Common myeloid progenitor, CD34-positive (primary cell): ENCODE measurements at regions of chr15 and their contacts with region 1.

Region 1: GRCh38 chr15:52805351-52806283 is 15.5 kb upstream of the ONECUT1 start:
- DNase-seq: peak in 2 of 3 donors; percentile 56 to 66
- H3K4me3 ChIP-seq: peak overlapping the region in 6 of 7 experiments; percentile 10 to 56 (median 34)
- H3K27ac ChIP-seq: no peak overlapping the region
- H3K4me1 ChIP-seq: peaks cover 3 to 31% (median 23%) of the 10 kb centered on the region in 4 experiments
- H3K27me3 ChIP-seq: peaks cover 33 to 99% (median 64%) of the 10 kb centered on the region in 5 experiments

Region 2: DNA sequence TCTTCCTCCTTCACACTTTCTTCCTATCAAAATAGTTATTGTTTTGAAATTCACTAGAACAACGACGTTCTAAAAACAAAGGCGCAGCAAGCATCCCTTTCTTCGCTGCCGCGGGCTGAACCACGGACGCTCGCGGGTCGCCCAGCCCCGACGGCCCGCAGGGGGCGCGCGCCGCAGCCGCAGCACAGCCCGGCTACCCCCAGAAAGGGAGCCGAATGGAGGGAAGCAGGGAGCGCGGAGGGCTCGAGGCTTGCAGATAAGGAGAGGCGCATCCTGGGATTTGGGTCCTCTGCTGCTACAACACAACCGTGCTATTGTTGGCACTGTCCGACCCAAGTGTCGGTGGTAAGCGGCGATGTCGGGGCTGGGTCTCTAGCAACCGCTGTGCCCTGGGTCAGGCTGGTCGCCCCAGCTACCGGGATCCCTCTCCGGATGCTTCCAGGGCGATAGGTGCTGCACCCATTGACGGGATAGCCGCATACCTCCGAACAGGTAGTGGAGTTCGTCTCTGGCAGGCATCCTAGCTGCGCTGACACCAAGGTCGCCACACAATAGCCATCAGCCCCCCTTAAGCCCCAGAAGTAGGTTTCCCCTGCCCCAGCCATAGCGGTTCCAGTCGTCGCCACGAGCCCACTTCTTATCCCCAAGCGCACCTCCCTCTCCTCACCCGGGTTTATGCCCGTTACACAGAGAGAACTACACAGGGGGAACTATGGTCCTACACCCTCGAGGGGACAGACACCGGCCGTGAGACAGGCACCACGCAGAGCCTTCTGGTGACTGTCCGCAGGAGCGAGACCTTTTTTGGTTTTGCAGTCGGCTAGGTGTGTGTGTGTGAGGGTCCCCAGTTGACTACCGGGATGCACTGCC is 21.5 kb before region 1 on chr15:
- CTCF ChIA-PET with region 1: interaction called, 14 read pairs
- POLR2A ChIA-PET with region 1: interaction called, 3 read pairs
- DNase-seq: peak in 2 of 3 donors; percentile 68 to 69
- H3K4me3 ChIP-seq: peak overlapping the region in 2 of 7 experiments; percentile 0 to 1
- H3K27ac ChIP-seq: no peak overlapping the region
- H3K4me1 ChIP-seq: peaks cover 6 to 52% (median 28%) of the 10 kb centered on the region in 4 experiments
- H3K27me3 ChIP-seq: peaks cover 12 to 82% (median 53%) of the 10 kb centered on the region in 5 experiments

Region 3: GRCh38 chr15:52790162-52790708 is 15.4 kb before region 1 on chr15 and contains the start of gene ONECUT1:
- CTCF ChIA-PET with region 1: interaction called, 10 read pairs
- POLR2A ChIA-PET with region 1: interaction called, 3 read pairs
- DNase-seq: peak in 2 of 3 donors; percentile 51
- H3K4me3 ChIP-seq: peak within 1 kb of the TSS; percentile 17 to 71 (median 58)
- H3K27ac ChIP-seq: no peak within 1 kb of the TSS
- H3K4me1 ChIP-seq: peaks cover 0 to 44% (median 26%) of the 10 kb centered on the region in 4 experiments
- H3K27me3 ChIP-seq: peaks cover 8 to 99% (median 57%) of the 10 kb centered on the region in 5 experiments

Region 4: GRCh38 chr15:52834379-52834778 is 28.8 kb after region 1 on chr15:
- CTCF ChIA-PET with region 1: no interaction called
- POLR2A ChIA-PET with region 1: no interaction called
- DNase-seq: no peak
- H3K4me3 ChIP-seq: no peak overlapping the region
- H3K27ac ChIP-seq: no peak overlapping the region
- H3K4me1 ChIP-seq: no peaks in the 10 kb centered on the region
- H3K27me3 ChIP-seq: peaks cover 0 to 8% (median 4%) of the 10 kb centered on the region in 5 experiments